A549 (cell line): ENCODE measurements at regions of chr2 and their contacts with region 1.

Region 1: GRCh38 chr2:237122214-237122666 is 36.6 kb downstream of the COPS8 start:
- DNase-seq: peak; percentile 35 to 80
- ATAC-seq: peak; percentile 92 to 97
- H3K4me3 ChIP-seq: no peak overlapping the region
- H3K27ac ChIP-seq: peak overlapping the region; percentile 44 to 73; a peak in 4 of 6 replicates
- H3K4me1 ChIP-seq: peaks cover 6% of the 10 kb centered on the region
- CTCF ChIP-seq: peak; percentile 86
- EP300 ChIP-seq: no peak
- POLR2A ChIP-seq: no peak
- RAD21 ChIP-seq: peak; percentile 91 to 92

Region 2: GRCh38 chr2:237132799-237133198 is 10.6 kb after region 1 on chr2:
- CTCF ChIA-PET with region 1: interaction called, 10 read pairs
- POLR2A ChIA-PET with region 1: no interaction called
- DNase-seq: peak; percentile 15 to 72
- ATAC-seq: peak in 1 of 2 experiments; percentile 66; a peak in 3 of 6 replicates
- H3K4me3 ChIP-seq: no peak overlapping the region
- H3K27ac ChIP-seq: 0 out of 6 replicates have a peak overlapping the region, but pooled peaks of 1 of the 2 experiments have one; percentile 20
- H3K4me1 ChIP-seq: peaks cover 11% of the 10 kb centered on the region
- CTCF ChIP-seq: peak; percentile 26; the same call in 1 of the 3 replicates
- EP300 ChIP-seq: no peak
- POLR2A ChIP-seq: no peak
- RAD21 ChIP-seq: peak; percentile 18 to 40; a peak in 1 of 5 replicates

Region 3: DNA sequence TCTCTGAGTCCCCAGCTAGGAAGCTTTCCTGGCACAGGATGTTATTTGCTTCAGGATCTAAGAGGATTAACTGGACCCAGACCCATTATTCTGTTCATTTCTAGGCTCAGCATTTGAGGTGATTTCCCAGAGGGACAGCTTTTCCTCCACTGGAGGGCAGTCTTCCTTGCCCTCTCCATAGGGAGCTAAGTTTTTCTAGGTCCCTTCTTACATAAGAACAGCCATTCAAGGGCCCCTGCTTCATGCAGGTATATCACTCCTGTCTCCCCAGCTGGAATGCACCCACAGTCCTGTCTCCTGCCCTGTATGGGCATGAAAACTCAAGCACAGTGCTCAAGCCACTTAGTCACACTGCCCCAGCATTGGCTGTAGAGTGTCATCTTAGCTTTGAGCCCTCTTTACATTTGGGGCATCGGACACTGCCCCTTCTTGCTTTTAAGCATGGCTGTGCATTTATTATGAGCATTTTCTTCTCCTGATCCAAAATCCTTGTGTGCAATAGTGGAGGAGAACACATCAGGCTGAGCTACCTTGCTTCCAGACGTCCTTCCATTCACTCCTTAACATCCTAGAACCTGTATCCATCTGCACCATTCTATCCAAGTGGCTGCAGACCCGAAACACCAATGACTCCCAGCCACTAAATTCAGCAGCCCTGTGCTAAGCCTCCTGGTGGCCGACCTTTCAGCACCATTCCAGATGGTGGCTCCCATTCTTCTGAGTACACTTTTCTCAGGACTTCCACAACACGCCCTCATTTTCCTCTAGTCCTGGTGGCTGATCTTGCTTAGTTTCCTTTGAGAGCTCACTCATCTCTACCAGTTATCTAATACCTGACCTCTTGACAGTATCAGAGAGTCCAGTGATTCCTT is 43.4 kb after region 1 on chr2:
- CTCF ChIA-PET with region 1: interaction called, 16 read pairs
- POLR2A ChIA-PET with region 1: no interaction called
- DNase-seq: peak in 1 of 2 experiments; percentile 35
- ATAC-seq: peak; percentile 68 to 80; a peak in 5 of 6 replicates
- H3K4me3 ChIP-seq: no peak overlapping the region
- H3K27ac ChIP-seq: no peak overlapping the region; a peak in 1 of 6 replicates
- H3K4me1 ChIP-seq: no peaks in the 10 kb centered on the region
- CTCF ChIP-seq: peak; percentile 52
- EP300 ChIP-seq: no peak
- POLR2A ChIP-seq: no peak
- RAD21 ChIP-seq: peak; percentile 38 to 63; a peak in 4 of 5 replicates

Region 4: GRCh38 chr2:237190966-237191713 is 68.9 kb after region 1 on chr2:
- CTCF ChIA-PET with region 1: no interaction called
- POLR2A ChIA-PET with region 1: no interaction called
- DNase-seq: no peak
- ATAC-seq: no peak
- H3K4me3 ChIP-seq: no peak overlapping the region
- H3K27ac ChIP-seq: peak overlapping the region in 1 of 2 experiments; percentile 43; a peak in 2 of 6 replicates
- H3K4me1 ChIP-seq: peaks cover under 1% of the 10 kb centered on the region; the same call in 1 of the 3 replicates
- CTCF ChIP-seq: no peak
- EP300 ChIP-seq: no peak
- POLR2A ChIP-seq: no peak
- RAD21 ChIP-seq: no peak

Region 5: DNA sequence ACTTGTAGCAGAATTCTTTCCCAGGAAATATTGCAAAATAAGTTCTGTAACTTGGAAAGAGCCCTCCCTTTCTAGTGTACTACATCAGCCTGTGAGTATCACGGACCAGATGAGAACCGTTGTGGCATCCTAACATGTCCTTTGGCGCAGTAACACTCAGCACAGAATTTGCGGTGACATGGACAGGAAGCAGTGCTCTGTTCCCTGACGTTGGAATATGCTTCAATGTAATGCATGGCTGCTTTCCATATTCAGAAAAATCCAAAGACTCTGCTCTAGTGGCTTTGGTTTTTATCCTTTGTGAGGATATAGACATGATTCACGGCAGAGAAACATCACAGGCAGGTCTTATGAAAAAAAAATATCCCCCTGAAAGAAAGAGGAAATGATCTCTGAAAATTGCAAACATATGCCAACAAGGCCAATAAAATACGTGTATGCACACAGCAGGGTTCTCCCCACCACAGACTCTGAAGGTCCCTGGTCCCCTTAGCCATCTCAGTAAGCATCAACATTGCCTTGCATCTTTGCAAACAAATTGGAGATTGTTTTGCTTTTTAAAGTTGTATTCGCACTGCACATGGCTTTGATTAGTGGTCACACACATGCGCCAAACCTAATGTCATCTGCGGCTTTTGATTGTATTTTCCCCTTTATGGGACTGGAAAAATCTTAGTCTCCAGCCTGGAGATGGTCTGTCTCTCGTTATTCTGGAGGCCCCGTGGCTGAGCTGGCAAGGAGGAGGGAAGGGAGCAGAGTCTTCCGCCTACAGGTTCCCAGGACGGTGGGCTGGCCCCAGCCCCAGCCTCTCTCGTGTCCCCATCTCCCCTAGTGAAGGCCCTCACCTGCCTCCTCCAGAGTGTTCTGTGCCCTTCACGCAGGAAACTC is 86.4 kb after region 1 on chr2:
- CTCF ChIA-PET with region 1: no interaction called
- POLR2A ChIA-PET with region 1: no interaction called
- DNase-seq: no peak
- ATAC-seq: no peak
- H3K4me3 ChIP-seq: no peak overlapping the region
- H3K27ac ChIP-seq: no peak overlapping the region
- H3K4me1 ChIP-seq: 0 out of 3 replicates have a peak, but pooled peaks cover 9% of the 10 kb centered on the region
- CTCF ChIP-seq: no peak
- EP300 ChIP-seq: no peak
- POLR2A ChIP-seq: no peak
- RAD21 ChIP-seq: no peak

Region 6: DNA sequence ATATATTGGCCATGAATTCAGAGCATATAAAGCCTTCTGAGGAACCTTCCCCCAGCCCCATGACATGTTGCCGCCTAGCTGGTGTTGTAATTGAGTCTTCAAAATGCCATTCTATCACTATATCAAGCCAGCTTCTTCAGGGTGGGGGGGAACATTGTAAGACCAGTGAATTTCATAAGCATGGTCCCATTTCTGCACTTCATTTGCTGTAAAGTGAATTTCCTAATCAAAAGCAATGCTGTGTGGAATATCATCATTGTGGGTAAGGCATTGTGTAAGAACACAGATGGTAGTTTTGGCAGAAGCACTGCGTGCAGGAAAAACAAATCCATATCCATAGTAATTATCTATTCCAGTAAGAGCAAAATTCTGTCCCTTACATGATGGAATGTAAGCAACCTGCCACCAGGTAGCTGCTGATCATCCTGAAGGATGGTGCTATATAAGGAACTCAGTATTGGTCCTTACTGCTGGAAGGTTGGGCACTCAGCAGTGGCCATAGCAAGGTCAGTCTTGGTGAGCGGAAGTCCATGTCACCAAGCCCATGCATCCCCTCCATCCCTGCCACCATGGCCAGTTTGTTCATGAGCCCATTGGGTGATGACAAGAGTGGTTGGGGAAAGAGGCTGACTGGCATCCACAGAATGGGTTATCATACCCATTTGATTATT is 122.9 kb after region 1 on chr2:
- CTCF ChIA-PET with region 1: no interaction called
- POLR2A ChIA-PET with region 1: no interaction called
- DNase-seq: no peak
- ATAC-seq: no peak
- H3K4me3 ChIP-seq: no peak overlapping the region
- H3K27ac ChIP-seq: no peak overlapping the region
- H3K4me1 ChIP-seq: no peaks in the 10 kb centered on the region
- CTCF ChIP-seq: no peak
- EP300 ChIP-seq: no peak
- POLR2A ChIP-seq: no peak
- RAD21 ChIP-seq: no peak